SK-N-SH (cell line): ENCODE measurements at regions of chr17 and their contacts with region 1.

Region 1: DNA sequence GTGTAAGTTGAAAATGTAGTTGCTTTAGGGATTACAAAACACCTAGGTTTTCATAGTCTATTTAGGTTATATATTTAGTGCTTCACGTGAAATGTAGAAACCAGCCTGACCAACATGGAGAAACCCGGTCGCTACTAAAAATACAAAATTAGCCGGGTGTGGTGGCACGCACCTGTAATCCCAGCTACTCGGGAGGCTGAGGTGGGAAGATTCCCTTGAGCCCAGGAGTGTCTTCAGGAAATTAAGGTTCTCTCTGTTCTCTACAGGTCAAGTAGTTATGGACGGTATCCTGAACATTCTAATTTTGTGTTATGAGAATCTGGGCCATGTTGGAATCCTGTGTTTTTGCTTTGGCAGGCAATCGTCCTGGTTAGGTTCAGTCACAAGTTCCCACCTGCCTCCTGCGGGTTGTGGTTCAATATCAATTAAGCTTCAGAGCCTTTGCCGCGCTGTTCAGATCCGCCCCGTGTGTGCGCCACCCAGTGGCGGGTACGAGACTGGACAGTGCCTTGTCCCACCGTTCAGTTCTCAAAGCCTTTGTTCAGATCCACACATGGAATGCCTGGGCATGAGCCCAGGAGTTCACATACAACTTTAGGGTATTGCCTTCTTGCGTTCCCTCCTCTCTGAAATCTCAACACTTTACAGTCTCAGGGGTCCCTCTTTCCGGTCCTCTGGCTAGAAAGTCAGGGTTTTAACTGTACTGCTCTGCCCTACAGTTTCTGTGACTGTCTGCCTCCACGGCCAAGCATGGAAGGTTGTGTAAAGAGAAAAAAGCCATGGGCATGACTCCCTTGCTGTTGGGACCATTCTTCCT is 41.7 kb downstream of the HEATR6 start:
- DNase-seq: peak; percentile 84
- H3K4me3 ChIP-seq: peak overlapping the region in 1 of 2 experiments; percentile 36; a peak in 1 of 4 replicates
- H3K27ac ChIP-seq: no peak overlapping the region
- H3K4me1 ChIP-seq: peaks cover 0 to 14% of the 10 kb centered on the region in 2 experiments; a peak in 1 of 4 replicates
- H3K27me3 ChIP-seq: no peaks in the 10 kb centered on the region
- CTCF ChIP-seq: peak; percentile 100
- EP300 ChIP-seq: no peak
- RAD21 ChIP-seq: peak; percentile 60

Region 2: DNA sequence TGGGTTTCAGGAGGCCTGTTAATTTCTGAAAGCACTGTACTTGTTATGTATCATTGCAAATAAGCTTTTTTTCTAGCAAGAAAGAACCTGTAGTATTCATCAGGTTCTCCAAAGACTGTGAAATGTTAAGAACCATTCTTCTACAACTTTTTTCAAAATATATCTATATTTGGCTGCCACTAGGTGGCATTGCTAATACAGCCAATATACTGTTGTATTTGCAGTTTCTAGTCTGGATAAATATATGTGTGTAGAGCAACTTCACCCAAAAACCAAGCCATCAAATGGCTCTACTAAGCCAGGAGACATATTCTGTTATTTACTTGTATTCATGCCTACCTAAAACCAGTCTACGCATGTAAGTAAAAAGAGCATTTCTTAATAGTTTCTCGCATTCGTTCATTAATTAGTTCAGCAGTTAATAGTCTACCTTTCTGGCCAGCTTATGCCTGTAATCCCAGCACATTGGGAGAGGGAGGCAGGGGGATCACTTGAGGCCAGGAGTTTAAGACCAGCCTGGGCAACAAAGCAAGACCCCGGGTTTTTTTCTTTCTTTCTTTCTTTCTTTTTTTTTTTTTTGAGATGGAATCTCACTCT is 290.1 kb before region 1 on chr17:
- CTCF ChIA-PET with region 1: interaction called, 33 read pairs
- POLR2A ChIA-PET with region 1: no interaction called
- DNase-seq: peak; percentile 44
- H3K4me3 ChIP-seq: no peak overlapping the region; a peak in 1 of 4 replicates
- H3K27ac ChIP-seq: peak overlapping the region; percentile 4 to 54; a peak in 3 of 4 replicates
- H3K4me1 ChIP-seq: peaks cover 0 to 3% of the 10 kb centered on the region in 2 experiments; a peak in 1 of 4 replicates
- H3K27me3 ChIP-seq: no peaks in the 10 kb centered on the region
- CTCF ChIP-seq: peak; percentile 95
- EP300 ChIP-seq: no peak
- RAD21 ChIP-seq: peak; percentile 76

Region 3: GRCh38 chr17:60049936-60050335 is 12.9 kb after region 1 on chr17:
- CTCF ChIA-PET with region 1: interaction called, 87 read pairs
- POLR2A ChIA-PET with region 1: interaction called, 3 read pairs
- DNase-seq: no peak
- H3K4me3 ChIP-seq: no peak overlapping the region
- H3K27ac ChIP-seq: no peak overlapping the region
- H3K4me1 ChIP-seq: no peaks in the 10 kb centered on the region
- H3K27me3 ChIP-seq: no peaks in the 10 kb centered on the region
- CTCF ChIP-seq: no peak
- EP300 ChIP-seq: no peak
- RAD21 ChIP-seq: no peak

Region 4: DNA sequence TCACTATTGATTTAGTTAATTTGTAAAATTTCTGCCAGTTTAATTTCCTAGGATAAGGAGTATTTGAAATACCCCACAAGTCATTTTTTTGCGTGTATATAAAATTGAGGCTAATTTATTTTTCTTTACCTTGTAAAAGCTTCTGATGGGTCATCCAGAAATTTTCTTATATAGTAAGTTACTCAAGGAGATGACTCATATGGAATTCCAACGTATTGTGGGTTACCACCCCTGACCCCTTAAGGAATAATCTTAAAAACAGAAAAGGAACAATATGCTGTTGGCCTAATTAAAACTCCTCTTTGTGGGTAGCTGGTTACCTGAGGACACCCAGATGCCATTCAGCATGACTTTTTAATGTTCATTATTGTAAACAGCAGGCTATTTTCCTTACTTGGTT is 28.1 kb after region 1 on chr17:
- CTCF ChIA-PET with region 1: interaction called, 24 read pairs
- POLR2A ChIA-PET with region 1: no interaction called
- DNase-seq: no peak
- H3K4me3 ChIP-seq: no peak overlapping the region
- H3K27ac ChIP-seq: no peak overlapping the region
- H3K4me1 ChIP-seq: no peaks in the 10 kb centered on the region; a peak in 1 of 4 replicates
- H3K27me3 ChIP-seq: no peaks in the 10 kb centered on the region
- CTCF ChIP-seq: no peak
- EP300 ChIP-seq: no peak
- RAD21 ChIP-seq: no peak

Region 5: DNA sequence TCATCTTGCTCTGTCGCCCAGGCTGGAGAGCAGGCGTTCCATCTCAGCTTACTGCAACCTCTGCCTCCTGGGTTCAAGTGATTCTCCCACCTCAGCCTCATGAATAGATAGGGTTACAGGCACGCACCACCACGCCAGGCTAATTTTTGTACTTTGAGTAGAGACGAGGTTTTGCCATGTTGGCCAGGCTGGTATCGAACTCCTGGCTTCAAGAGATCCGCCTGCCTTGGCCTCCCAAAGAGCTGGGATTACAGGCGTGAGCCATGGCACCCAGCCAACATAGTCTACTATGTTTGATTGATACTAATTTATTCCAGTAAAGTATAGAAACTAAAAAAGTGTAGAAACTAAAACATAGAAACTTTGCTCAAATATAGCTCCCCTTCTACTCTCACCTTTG is 207.7 kb after region 1 on chr17:
- CTCF ChIA-PET with region 1: no interaction called
- POLR2A ChIA-PET with region 1: no interaction called
- DNase-seq: no peak
- H3K4me3 ChIP-seq: no peak overlapping the region
- H3K27ac ChIP-seq: no peak overlapping the region
- H3K4me1 ChIP-seq: no peaks in the 10 kb centered on the region
- H3K27me3 ChIP-seq: no peaks in the 10 kb centered on the region
- CTCF ChIP-seq: no peak
- EP300 ChIP-seq: no peak
- RAD21 ChIP-seq: no peak

Region 6: GRCh38 chr17:60284709-60285108 is 247.7 kb after region 1 on chr17:
- CTCF ChIA-PET with region 1: no interaction called
- POLR2A ChIA-PET with region 1: no interaction called
- DNase-seq: no peak
- H3K4me3 ChIP-seq: no peak overlapping the region
- H3K27ac ChIP-seq: no peak overlapping the region
- H3K4me1 ChIP-seq: no peaks in the 10 kb centered on the region
- H3K27me3 ChIP-seq: no peaks in the 10 kb centered on the region
- CTCF ChIP-seq: no peak
- EP300 ChIP-seq: no peak
- RAD21 ChIP-seq: no peak

Region 7: DNA sequence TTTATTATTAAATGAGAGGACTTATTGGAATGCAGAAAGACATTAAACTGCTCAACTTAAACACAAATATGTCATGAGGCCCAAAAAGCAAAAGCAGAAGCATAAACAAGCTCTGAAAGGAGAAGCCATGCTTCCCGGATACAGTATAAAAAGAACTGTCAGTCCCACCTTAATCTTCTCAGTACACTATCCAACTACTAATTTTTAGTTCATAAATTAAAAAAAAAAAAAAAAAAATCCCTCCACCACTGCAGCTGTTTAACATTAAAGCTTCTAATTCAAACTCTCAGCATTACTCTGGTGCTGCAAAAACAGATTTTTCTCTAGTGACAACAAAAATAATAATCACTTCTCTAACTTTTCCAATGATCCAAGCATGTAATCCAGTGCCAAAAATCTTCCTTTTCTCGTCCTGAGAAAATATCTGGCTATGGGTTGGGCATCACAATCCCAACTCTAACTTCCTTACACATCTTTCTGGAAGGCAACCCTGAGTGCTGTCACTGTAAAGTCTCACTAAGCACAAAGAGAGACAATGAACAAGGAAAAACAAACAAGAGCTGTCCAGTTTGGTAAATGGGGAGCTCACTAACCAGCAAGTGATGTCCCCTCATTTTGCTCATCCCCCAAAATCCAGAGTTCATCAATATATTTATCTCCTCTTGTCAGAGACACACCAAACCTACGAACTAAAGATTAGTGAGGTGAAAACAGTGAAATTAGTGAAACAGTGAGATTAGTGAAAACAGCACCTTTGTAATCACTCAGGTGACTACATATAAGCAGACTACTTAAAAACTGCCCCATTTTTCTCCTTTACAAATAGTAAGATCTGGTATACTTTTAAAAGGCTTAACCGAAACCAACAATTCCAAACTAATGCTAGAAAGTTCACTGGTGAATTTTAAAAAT is 349.4 kb after region 1 on chr17:
- CTCF ChIA-PET with region 1: no interaction called
- POLR2A ChIA-PET with region 1: no interaction called
- DNase-seq: no peak
- H3K4me3 ChIP-seq: no peak overlapping the region
- H3K27ac ChIP-seq: peak overlapping the region; percentile 28 to 35; a peak in 3 of 4 replicates
- H3K4me1 ChIP-seq: peaks cover 29 to 39% of the 10 kb centered on the region in 2 experiments
- H3K27me3 ChIP-seq: no peaks in the 10 kb centered on the region
- CTCF ChIP-seq: no peak
- EP300 ChIP-seq: no peak
- RAD21 ChIP-seq: no peak